ENCODE measurements at regions of chr6 and their contacts with region 1.

Region 1: DNA sequence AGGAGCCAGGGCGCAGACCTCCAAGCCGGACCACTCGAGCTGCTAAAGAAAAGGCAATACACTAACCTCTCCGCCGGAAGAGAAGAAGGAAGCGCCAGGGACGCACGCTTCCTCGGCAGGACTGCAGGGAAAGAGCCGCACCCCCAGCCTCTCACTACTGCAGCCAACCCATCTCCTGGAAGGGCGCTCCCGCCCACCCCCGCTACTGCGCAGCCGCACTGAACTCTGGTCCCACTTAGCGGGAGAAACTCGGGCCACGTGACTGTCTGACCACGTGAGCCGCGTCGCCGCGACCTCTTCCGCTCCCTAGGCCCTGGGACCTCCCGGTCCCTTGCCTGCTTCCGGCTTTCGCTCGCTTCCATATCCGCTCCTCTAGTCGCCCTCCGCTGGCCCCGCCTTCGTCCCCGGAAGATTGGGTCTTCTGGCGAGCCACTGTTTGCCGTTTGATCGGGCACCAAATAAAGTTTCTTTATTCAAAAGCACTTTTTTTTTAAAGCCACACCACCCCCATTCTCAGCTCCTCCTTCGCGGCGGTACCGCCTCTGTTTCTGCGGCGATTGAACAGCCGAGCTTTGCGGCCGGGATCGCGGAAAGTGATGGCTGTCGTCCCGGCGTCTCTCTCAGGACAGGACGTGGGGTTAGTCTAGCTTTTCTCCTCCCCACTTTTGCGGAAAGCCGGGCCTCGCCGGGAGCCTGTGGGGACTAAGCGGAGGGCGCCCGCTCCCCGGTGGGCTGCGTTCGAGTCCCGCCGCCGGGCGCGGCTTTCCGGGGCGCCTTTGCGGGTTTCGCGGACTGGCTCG is at the start of gene RMND1:
- DNase-seq: peak; percentile 100
- H3K4me3 Mint-ChIP-seq: peak within 1 kb of the TSS; percentile 94
- H3K27ac Mint-ChIP-seq: peak within 1 kb of the TSS; percentile 78
- H3K4me1 Mint-ChIP-seq: peaks cover 29% of the 10 kb centered on the region
- H3K27me3 Mint-ChIP-seq: peaks cover 3% of the 10 kb centered on the region
- total RNA-seq, gene RMND1: 22.6 to 23.0 TPM

Region 2: GRCh38 chr6:150865406-150866146 is 586.6 kb before region 1 on chr6 and contains the start of gene MTHFD1L:
- CTCF ChIA-PET with region 1: no interaction called
- POLR2A ChIA-PET with region 1: no interaction called
- intact Hi-C with region 1: loop called (anchors 10 kb)
- DNase-seq: peak; percentile 84
- H3K4me3 Mint-ChIP-seq: peak within 1 kb of the TSS; percentile 92
- H3K27ac Mint-ChIP-seq: peak within 1 kb of the TSS; percentile 91
- H3K4me1 Mint-ChIP-seq: peaks cover 22% of the 10 kb centered on the region
- H3K27me3 Mint-ChIP-seq: peaks cover 13% of the 10 kb centered on the region
- total RNA-seq, gene MTHFD1L: 115 to 119 TPM

Region 3: DNA sequence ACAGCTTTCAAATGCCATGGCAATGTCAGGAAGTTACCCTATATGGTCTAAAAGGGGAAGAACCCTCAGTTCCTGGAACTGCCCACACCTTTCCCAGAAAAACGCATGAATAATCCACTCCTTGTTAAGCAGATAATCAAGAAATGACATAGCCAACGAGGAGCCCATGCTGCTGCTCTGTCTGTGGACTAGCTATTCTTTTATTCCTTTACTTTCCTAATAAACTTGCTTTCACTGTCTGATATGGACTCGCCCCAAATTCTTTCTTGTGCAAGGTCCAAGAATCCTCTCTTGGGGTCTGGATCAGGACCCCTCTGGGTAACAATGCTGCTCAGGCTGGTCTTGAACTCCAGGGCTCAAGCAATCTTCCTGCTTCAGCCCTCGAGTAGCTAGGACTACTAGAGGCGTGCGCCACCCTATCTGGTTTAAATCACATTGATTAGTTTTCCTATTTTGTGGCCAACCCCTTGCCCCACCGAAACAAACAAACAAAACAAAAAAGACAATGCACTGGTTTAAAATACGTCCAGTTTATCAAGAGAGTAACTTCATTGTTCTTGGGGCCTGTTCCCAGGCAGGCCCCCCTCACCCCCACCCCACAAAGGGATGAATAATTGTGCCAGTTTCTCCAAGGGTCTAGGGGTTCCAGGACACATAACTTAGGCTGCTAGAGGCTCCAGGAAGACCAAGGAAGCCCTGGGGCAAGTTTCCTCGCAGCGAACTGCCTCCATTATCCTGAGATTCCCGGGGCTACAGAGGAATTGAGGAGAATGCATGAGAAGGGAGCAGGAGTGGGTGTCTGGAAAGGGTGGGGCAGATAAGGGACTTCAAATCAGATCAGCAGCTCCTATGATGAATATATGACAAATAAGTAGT is 222.5 kb before region 1 on chr6:
- CTCF ChIA-PET with region 1: no interaction called
- POLR2A ChIA-PET with region 1: no interaction called
- intact Hi-C with region 1: loop called (anchors 2 kb)
- DNase-seq: peak; percentile 81
- H3K4me3 Mint-ChIP-seq: no peak overlapping the region
- H3K27ac Mint-ChIP-seq: no peak overlapping the region
- H3K4me1 Mint-ChIP-seq: peaks cover 15% of the 10 kb centered on the region
- H3K27me3 Mint-ChIP-seq: peaks cover 1% of the 10 kb centered on the region

Region 4: DNA sequence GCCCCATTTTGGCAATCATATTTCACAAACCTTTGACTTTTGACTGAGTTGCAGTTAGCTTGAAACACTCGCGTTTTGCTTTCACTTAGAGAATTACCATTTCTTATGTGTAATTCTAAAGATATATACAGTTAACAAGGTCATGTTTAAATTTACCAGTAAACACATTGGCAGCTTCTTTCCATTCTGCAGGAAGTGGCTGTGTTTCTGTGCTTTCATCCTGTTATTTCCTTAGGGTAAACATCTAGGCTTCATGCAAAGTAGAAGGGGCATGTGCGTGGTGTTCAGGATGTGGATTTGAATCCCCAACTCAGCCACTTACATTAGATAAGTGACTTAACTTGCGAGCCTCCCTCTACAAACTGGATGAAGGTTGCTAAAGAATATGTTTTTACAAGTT is 171.3 kb before region 1 on chr6:
- CTCF ChIA-PET with region 1: no interaction called
- POLR2A ChIA-PET with region 1: no interaction called
- intact Hi-C with region 1: no loop called
- DNase-seq: no peak
- H3K4me3 Mint-ChIP-seq: no peak overlapping the region
- H3K27ac Mint-ChIP-seq: no peak overlapping the region
- H3K4me1 Mint-ChIP-seq: peaks cover 20% of the 10 kb centered on the region
- H3K27me3 Mint-ChIP-seq: peaks cover 15% of the 10 kb centered on the region

Region 5: DNA sequence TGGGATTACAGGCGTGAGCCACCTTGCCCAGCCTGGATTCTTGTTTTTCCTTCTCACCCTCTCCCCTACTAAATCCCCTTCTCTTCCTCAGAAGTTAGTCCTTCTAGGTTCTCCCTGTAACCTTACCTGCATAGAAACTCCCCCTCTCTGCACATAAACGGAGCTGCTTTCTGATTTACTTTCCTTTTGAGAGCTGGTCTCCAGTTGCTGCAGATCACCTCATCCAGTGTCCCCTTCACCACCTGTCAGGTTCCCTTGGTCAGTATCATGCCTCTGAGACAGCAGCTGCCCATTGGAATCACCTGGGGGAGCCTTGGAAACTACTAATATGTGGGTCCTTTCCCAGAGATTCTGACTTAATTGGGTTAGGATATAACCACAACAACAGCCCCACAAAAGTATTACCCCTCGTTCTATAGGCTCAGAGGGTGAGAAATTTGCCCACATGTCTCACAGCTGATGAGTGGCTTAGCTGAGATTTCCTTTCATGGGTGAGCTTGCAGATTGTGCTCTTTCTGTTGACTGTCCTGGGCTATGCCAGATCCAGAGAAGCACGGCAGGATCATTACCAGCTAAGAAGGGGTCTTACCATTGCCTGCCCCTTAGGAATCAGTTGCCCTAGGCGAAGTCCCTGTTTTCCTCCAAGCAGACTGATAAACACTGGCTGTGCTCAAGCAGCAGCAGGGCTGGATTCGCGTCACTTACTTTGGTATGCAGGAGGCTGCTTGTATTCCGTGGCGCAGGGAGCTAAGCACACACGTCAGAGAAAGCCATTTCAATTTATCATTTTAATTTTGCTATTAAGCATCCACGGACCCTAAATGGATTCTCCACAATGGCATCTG is 161.1 kb before region 1 on chr6:
- CTCF ChIA-PET with region 1: no interaction called
- POLR2A ChIA-PET with region 1: no interaction called
- intact Hi-C with region 1: loop called (anchors 1 kb)
- DNase-seq: no peak
- H3K4me3 Mint-ChIP-seq: no peak overlapping the region
- H3K27ac Mint-ChIP-seq: no peak overlapping the region
- H3K4me1 Mint-ChIP-seq: peaks cover 26% of the 10 kb centered on the region
- H3K27me3 Mint-ChIP-seq: peaks cover 35% of the 10 kb centered on the region

Region 6: GRCh38 chr6:151370509-151371078 is 81.6 kb before region 1 on chr6:
- CTCF ChIA-PET with region 1: no interaction called
- POLR2A ChIA-PET with region 1: no interaction called
- intact Hi-C with region 1: loop called (anchors 1 kb)
- DNase-seq: no peak
- H3K4me3 Mint-ChIP-seq: no peak overlapping the region
- H3K27ac Mint-ChIP-seq: no peak overlapping the region
- H3K4me1 Mint-ChIP-seq: peaks cover 37% of the 10 kb centered on the region
- H3K27me3 Mint-ChIP-seq: no peaks in the 10 kb centered on the region

Region 7: GRCh38 chr6:151390276-151391032 is 61.7 kb before region 1 on chr6:
- CTCF ChIA-PET with region 1: interaction called, 3 read pairs
- POLR2A ChIA-PET with region 1: interaction called, 16 read pairs
- intact Hi-C with region 1: loop called (anchors 1 kb)
- DNase-seq: peak; percentile 99
- H3K4me3 Mint-ChIP-seq: peak overlapping the region; percentile 98
- H3K27ac Mint-ChIP-seq: peak overlapping the region; percentile 72
- H3K4me1 Mint-ChIP-seq: peaks cover 63% of the 10 kb centered on the region
- H3K27me3 Mint-ChIP-seq: no peaks in the 10 kb centered on the region

Region 8: GRCh38 chr6:151475653-151476523 is 23.7 kb after region 1 on chr6:
- CTCF ChIA-PET with region 1: interaction called, 9 read pairs
- POLR2A ChIA-PET with region 1: interaction called, 4 read pairs
- intact Hi-C with region 1: loop called (anchors 2 kb)
- DNase-seq: peak; percentile 38
- H3K4me3 Mint-ChIP-seq: no peak overlapping the region
- H3K27ac Mint-ChIP-seq: no peak overlapping the region
- H3K4me1 Mint-ChIP-seq: peaks cover 5% of the 10 kb centered on the region
- H3K27me3 Mint-ChIP-seq: no peaks in the 10 kb centered on the region

Region 9: GRCh38 chr6:152117156-152118133 is 665.3 kb after region 1 on chr6:
- CTCF ChIA-PET with region 1: no interaction called
- POLR2A ChIA-PET with region 1: no interaction called
- intact Hi-C with region 1: no loop called
- DNase-seq: no peak
- H3K4me3 Mint-ChIP-seq: no peak overlapping the region
- H3K27ac Mint-ChIP-seq: no peak overlapping the region
- H3K4me1 Mint-ChIP-seq: peaks cover 3% of the 10 kb centered on the region
- H3K27me3 Mint-ChIP-seq: peaks cover 1% of the 10 kb centered on the region

Measured in activated CD4-positive, alpha-beta memory T cell treated with anti-CD3 and anti-CD28 coated beads for 36 hours (primary cell).